Right ventricle myocardium inferior (tissue), 1 donor: ENCODE measurements at regions of chr14 and their contacts with region 1.

Region 1: GRCh38 chr14:59360923-59361794 is 104.0 kb downstream of the GPR135 start:
- DNase-seq: peak; percentile 80
- ATAC-seq: peak; percentile 64

Region 2: GRCh38 chr14:59389936-59390335 is 28.8 kb after region 1 on chr14:
- intact Hi-C with region 1: no loop called
- DNase-seq: no peak
- ATAC-seq: no peak

Region 3: DNA sequence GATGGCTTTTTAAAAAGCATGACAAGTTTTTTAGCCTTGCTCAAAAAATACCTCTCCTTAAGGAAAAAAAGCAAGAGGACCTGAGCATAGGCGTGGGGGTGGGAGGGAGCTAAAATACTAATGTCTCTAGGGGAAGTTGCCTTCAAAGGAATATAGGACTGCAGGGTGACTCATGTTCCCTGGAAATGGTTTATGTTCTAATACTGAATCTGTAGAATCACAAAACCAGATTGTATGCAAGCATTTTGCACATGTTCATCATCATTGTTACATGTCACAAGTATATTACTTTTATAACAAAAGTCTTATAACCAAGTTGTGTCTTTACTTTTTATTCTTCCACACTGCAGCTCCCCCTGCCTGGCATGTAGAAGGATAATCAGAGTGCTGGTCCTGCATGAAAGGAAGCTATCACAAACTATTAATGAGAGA is 67.4 kb after region 1 on chr14:
- intact Hi-C with region 1: loop called (anchors 2 kb)
- DNase-seq: no peak
- ATAC-seq: no peak